Activated CD8-positive, alpha-beta T cell treated with anti-CD3 and anti-CD28 coated beads for 36 hours (primary cell): ENCODE measurements at regions of chr6 and their contacts with region 1.

Region 1: DNA sequence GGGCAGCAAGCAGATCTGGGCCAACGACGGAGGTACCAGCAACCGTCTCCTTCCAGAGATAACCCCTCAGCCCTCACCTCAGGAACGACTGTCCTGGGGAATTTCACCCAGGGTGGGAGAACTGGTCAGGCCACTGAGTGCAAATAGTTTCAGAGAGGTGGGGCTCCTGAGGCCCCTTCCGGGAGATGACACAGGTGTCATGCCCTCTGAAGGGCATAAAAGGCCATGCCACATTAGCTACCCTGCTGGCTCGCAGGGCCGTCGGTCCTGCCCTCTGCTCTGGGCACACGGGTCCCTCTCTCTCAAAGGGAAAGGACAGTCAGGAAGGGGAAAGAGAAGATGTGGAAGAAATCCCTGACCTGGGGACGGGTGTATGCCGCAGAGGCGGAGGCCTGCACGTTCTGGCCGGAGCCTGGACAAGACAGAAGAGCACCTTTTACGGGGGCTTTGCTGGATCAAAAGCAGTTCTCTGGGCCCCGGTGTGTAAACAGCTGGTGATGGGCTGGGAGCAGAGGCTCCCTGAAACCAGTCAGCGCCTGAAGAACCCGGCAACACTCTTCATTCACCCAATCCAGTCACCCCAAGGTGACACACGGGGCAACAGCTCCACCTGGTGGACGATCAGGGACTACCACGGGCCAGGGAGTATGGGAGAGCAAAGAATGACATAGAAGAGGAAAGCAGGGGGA is 6.4 kb upstream of the TAF8 start:
- DNase-seq: peak; percentile 94
- ATAC-seq: peak; percentile 31
- H3K4me3 Mint-ChIP-seq: peak overlapping the region; percentile 75
- H3K27ac Mint-ChIP-seq: peak overlapping the region; percentile 99
- H3K4me1 Mint-ChIP-seq: peaks cover 83% of the 10 kb centered on the region
- H3K27me3 Mint-ChIP-seq: no peaks in the 10 kb centered on the region
- CTCF ChIP-seq: peak; percentile 92

Region 2: DNA sequence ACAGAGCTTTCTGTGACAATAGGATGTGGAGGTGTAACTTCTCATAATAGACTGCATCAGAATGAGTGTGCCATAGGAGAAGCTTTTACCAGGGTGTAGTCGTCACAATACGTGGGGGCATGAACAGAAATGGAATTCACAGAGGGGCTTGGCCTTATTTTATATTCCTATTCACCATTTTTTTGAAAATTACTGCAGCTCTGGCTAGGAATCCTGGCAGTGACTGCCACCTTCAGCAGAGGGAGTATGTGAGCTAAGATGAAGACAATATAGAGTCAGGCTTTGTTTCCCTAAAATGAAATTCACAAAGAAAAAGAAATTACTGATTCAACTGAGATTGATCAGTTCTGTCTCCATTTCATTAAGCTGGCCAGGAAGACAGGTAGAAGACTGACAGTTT is 242.6 kb before region 1 on chr6:
- CTCF ChIA-PET with region 1: interaction called, 28 read pairs
- POLR2A ChIA-PET with region 1: interaction called, 3 read pairs
- intact Hi-C with region 1: no loop called
- DNase-seq: no peak
- ATAC-seq: no peak
- H3K4me3 Mint-ChIP-seq: no peak overlapping the region
- H3K27ac Mint-ChIP-seq: no peak overlapping the region
- H3K4me1 Mint-ChIP-seq: no peaks in the 10 kb centered on the region
- H3K27me3 Mint-ChIP-seq: no peaks in the 10 kb centered on the region
- CTCF ChIP-seq: no peak

Region 3: DNA sequence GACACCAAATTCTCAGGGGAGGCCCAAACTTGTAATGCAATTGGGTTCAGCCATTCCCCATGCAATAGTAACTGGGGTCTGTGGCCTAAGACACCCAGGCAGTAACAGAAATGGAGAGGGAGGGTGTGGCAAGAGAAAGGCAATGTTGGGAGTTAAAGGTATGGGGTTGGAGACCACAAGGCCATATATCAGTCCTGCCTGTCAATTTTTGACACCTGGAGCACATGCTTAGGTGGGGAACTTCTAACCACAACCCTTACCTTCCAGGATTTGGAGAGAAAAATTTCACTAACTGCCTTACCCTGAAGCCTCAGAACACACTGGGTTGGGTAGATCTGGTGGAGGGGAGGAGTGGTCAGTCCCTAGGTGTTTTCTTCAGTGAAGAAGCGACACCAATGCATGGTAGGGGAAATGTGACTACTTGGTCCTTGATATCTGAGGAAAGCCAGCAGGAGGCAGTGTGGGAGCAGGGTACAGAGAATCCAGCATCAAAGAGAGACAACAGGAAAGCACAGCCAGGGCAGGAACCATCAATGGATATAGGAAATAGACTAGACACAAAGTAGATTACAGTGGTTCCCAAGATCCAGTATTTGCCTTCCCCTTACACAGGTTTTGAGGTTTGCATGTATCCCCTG is 141.9 kb before region 1 on chr6:
- CTCF ChIA-PET with region 1: interaction called, 46 read pairs
- POLR2A ChIA-PET with region 1: interaction called, 4 read pairs
- intact Hi-C with region 1: no loop called
- DNase-seq: peak; percentile 71
- ATAC-seq: peak; percentile 68
- H3K4me3 Mint-ChIP-seq: no peak overlapping the region
- H3K27ac Mint-ChIP-seq: no peak overlapping the region
- H3K4me1 Mint-ChIP-seq: peaks cover 4% of the 10 kb centered on the region
- H3K27me3 Mint-ChIP-seq: no peaks in the 10 kb centered on the region
- CTCF ChIP-seq: peak; percentile 38

Region 4: DNA sequence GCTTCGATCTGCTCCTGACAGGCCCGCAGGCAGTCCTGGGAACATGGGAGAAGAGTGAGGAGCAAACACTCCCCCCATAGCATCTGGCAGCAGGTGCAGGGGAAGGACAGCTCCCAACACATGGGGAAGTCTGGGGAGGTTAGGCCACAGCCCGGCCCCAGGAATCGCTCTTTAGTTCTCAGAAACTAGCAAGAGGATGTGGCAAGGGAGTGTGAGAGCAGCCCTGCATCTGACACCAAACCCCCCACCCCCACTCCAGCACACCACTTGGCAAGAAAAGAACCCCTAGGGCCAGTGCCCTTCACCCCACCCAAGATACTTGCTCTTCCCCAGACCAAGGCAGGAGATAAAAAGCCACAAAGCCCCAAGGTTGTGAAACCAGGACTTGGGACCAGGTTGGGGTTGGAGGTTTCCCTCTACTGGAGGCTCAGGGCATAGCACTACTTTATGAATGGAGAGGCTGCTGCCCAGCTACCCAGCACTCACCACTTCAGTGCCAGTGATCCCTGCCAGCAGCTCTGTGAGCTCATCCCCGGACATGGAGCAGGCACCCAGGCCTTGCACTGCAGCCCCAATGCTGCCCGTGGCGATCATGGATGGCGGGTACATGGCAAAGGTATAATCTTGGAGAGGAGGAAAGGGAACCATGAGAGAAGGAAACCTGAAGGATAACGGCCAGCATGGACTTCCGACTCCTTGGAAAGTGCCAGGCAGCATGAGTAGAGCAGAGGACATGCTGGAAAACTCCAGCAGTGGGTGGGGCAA is 107.7 kb before region 1 on chr6:
- CTCF ChIA-PET with region 1: interaction called, 392 read pairs
- POLR2A ChIA-PET with region 1: interaction called, 358 read pairs
- intact Hi-C with region 1: loop called (anchors 2 kb)
- DNase-seq: peak; percentile 97
- ATAC-seq: peak; percentile 83
- H3K4me3 Mint-ChIP-seq: peak overlapping the region; percentile 90
- H3K27ac Mint-ChIP-seq: peak overlapping the region; percentile 91
- H3K4me1 Mint-ChIP-seq: peaks cover 50% of the 10 kb centered on the region
- H3K27me3 Mint-ChIP-seq: no peaks in the 10 kb centered on the region
- CTCF ChIP-seq: peak; percentile 86

Region 5: DNA sequence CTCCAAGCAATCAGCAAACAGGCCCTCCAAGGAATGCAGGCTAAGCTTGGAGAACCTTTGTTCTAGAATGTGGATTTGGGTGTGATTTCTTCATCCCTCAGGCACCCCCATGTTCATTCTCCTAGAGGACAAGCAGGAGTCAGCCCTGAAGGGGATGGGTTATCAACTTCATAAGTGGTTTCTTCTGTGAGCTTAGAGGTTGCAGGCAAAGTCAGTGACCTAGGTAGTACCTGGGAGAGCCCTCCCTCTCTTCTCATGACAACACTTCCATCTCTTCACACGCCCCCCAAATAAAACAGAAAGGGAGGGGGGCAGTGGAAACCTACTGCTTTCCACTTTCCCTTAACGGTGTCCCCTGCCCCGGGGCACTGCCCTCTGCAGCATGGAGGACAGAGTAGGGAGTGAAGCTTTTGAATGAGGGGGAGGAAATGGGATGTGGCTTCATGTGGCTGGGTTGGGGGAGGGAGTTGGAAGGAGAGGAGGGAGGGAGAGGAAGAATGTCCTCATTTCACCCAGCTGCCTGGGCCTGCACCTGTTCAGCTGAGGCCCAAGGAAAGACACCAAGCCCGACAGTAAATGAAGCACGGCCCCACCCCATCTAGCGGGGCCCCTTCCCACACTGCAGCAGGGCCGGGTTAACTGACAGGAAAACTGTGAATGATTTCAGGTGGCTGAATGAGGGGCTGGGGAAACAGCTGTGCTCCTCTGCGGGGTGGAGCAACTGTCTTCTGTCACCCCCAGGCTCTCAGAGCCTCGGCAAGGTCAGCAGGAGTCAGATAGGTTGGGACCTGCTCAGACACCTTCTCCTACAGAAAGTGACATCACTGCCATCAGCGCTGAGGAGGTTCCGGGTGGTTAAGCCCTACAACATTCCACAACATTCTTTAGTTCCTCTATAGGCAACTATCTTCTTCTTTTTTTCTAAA is 33.7 kb before region 1 on chr6:
- CTCF ChIA-PET with region 1: interaction called, 23 read pairs
- POLR2A ChIA-PET with region 1: interaction called, 6 read pairs
- intact Hi-C with region 1: loop called (anchors 5 kb)
- DNase-seq: peak; percentile 68
- ATAC-seq: peak; percentile 69
- H3K4me3 Mint-ChIP-seq: peak overlapping the region; percentile 74
- H3K27ac Mint-ChIP-seq: peak overlapping the region; percentile 94
- H3K4me1 Mint-ChIP-seq: peaks cover 76% of the 10 kb centered on the region
- H3K27me3 Mint-ChIP-seq: no peaks in the 10 kb centered on the region
- CTCF ChIP-seq: no peak

Region 6: GRCh38 chr6:42104095-42104806 is 60.3 kb after region 1 on chr6:
- CTCF ChIA-PET with region 1: interaction called, 17 read pairs
- POLR2A ChIA-PET with region 1: interaction called, 3 read pairs
- intact Hi-C with region 1: no loop called
- DNase-seq: peak; percentile 86
- ATAC-seq: peak; percentile 76
- H3K4me3 Mint-ChIP-seq: peak overlapping the region; percentile 71
- H3K27ac Mint-ChIP-seq: peak overlapping the region; percentile 78
- H3K4me1 Mint-ChIP-seq: peaks cover 26% of the 10 kb centered on the region
- H3K27me3 Mint-ChIP-seq: no peaks in the 10 kb centered on the region
- CTCF ChIP-seq: peak; percentile 99

Region 7: GRCh38 chr6:42352856-42353564 is 309.1 kb after region 1 on chr6:
- CTCF ChIA-PET with region 1: no interaction called
- POLR2A ChIA-PET with region 1: no interaction called
- intact Hi-C with region 1: no loop called
- DNase-seq: no peak
- ATAC-seq: no peak
- H3K4me3 Mint-ChIP-seq: no peak overlapping the region
- H3K27ac Mint-ChIP-seq: no peak overlapping the region
- H3K4me1 Mint-ChIP-seq: peaks cover 12% of the 10 kb centered on the region
- H3K27me3 Mint-ChIP-seq: no peaks in the 10 kb centered on the region
- CTCF ChIP-seq: no peak